Activated CD4-positive, alpha-beta memory T cell treated with anti-CD3 and anti-CD28 coated beads for 36 hours (primary cell): ENCODE measurements at regions of chr15 and their contacts with region 1.

Region 1: DNA sequence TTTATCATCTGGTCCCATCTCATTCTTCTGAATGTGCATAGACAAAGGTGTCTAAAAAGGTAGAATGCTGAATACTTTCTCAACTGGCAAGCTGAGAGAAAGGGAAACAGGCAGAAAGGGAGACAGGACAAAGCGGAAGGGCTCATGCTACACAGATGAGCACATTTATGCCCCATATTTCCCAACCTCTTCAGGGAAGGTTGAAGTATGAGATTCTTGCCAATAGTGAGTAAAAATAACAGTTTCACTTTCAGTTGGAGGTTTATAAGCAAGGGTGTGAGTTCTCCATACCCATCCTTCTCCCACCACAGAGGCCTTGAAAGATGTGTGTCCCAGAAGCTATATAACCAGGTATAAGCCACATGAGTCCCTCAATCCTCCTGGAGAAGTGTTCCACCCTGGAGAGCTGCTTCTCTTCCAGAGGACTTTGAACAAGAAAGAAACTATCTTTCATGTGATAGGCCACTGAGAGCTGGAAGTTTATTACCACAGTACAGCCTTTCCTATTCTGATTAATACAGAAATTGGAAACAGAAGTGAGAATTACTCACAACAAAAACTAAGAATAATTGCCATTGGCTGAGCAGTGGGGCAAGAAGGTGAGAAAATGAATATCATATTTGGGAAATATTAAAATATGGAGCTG is 709.4 kb upstream of the NR2F2 start:
- DNase-seq: no peak
- H3K4me3 Mint-ChIP-seq: no peak overlapping the region
- H3K27ac Mint-ChIP-seq: no peak overlapping the region
- H3K4me1 Mint-ChIP-seq: peaks cover 11% of the 10 kb centered on the region
- H3K27me3 Mint-ChIP-seq: no peaks in the 10 kb centered on the region

Region 2: DNA sequence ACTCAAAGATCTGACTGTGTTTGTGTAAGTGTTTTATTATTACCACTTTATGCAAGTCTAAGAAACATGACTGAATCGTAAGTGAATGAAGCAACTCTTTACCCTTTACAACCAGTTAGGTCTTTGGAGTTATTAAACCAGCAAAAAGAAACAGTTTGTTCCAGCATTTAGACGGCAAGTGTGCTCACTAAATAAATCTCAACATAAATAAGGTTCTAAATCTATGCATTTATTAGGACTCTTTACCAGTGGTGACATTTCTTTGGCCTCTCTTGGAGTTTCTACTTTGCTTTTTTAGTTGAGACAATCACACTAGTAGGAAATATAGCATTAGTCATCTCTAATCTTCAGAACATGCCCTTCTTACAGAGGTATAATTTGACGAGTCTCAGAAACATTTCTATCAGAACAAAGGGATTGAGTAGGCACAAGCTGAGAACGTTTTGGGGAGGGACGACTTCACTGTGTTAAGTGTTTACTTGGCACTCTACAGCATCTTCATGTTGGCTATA is 30.5 kb before region 1 on chr15:
- CTCF ChIA-PET with region 1: interaction called, 3 read pairs
- POLR2A ChIA-PET with region 1: no interaction called
- intact Hi-C with region 1: loop called (anchors 1 kb)
- DNase-seq: no peak
- H3K4me3 Mint-ChIP-seq: no peak overlapping the region
- H3K27ac Mint-ChIP-seq: no peak overlapping the region
- H3K4me1 Mint-ChIP-seq: no peaks in the 10 kb centered on the region
- H3K27me3 Mint-ChIP-seq: no peaks in the 10 kb centered on the region